ENCODE measurements at regions of chr11 and their contacts with region 1.

Region 1: GRCh38 chr11:42344204-42344792 is 884.8 kb upstream of the LRRC4C start:
- DNase-seq: no peak
- H3K4me3 ChIP-seq: no peak overlapping the region
- H3K27ac ChIP-seq: no peak overlapping the region
- H3K27me3 ChIP-seq: no peaks in the 10 kb centered on the region
- CTCF ChIP-seq: no peak

Region 2: DNA sequence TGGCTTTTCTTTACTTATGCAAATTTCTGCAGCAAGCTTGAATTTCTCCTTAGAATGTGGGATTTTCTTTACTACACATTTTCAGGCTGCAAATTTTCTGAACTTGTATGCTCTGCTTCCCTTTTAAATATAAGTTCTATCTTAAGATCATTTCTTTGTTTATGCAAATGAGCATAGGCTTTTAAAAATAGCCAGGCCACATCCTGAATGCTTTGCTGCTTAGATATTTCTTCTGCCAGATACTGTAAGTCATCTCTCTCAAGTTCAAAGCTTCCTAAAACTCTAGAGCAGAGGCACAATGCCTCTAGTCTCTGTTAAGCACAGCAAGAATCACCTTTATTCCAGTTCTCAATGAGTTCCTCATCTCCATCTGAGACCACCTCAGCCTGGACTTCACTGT is 199.0 kb before region 1 on chr11:
- intact Hi-C with region 1: no loop called
- DNase-seq: no peak
- H3K4me3 ChIP-seq: no peak overlapping the region
- H3K27ac ChIP-seq: no peak overlapping the region
- H3K27me3 ChIP-seq: peaks cover 0 to 1% (median 0%) of the 10 kb centered on the region in 45 donors
- CTCF ChIP-seq: no peak

Region 3: DNA sequence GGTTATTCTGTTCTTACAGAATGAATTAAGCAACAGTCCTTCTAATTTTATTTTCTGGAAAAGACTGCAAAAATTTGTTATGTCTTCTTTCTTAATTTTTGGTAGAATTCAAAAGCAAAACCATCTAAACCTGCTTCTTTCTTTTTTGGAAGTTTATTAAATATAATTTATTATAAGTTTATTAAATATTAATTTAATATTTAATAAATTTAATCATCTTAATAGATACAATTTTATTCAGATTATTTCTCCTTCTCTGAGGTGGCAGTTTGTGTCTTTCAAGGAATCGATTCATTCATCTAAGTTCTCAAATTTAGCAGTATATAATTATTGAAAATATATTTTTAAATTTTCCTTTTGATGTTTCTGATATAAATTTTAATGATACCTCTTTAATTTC is 47.4 kb before region 1 on chr11:
- intact Hi-C with region 1: no loop called
- DNase-seq: no peak
- H3K4me3 ChIP-seq: no peak overlapping the region
- H3K27ac ChIP-seq: no peak overlapping the region
- H3K27me3 ChIP-seq: no peaks in the 10 kb centered on the region
- CTCF ChIP-seq: no peak

Region 4: GRCh38 chr11:42407341-42407740 is 63.0 kb after region 1 on chr11:
- intact Hi-C with region 1: loop called in 1 of 2 experiments (anchors 10 kb)
- DNase-seq: peak; percentile 18 to 74 (median 57)
- H3K4me3 ChIP-seq: no peak overlapping the region
- H3K27ac ChIP-seq: peak overlapping the region in 8 of 59 donors; percentile 9 to 39 (median 20)
- H3K27me3 ChIP-seq: no peaks in the 10 kb centered on the region
- CTCF ChIP-seq: peak in 49 of 56 donors; percentile 17 to 62 (median 41)

Measured in dorsolateral prefrontal cortex (tissue), 120 donors.